ENCODE measurements at regions of chr4 and their contacts with region 1.

Region 1: GRCh38 chr4:169612871-169613859 is 782 bp upstream of the NEK1 start:
- DNase-seq: no peak

Region 2: DNA sequence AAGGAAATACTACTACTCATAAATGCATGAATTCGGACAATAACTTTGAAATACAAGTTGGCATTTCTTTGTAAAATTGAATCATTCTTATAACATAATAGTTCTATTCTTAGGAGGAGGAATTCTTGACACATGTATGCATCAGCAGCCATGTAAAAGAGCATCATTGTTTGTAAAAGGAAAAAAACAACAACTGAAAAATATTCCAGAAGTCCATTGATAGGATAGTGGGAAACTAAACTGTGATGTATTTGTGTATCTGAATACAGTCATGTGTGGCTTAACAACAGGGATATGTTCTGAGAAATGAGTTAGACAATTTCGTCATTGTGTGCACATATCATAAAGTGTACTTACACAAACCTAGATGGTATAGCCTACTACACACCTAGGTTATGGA is 240.4 kb before region 1 on chr4:
- intact Hi-C with region 1: no loop called
- DNase-seq: no peak

Region 3: GRCh38 chr4:169675825-169676224 is 62.7 kb after region 1 on chr4:
- intact Hi-C with region 1: no loop called
- DNase-seq: no peak

Region 4: DNA sequence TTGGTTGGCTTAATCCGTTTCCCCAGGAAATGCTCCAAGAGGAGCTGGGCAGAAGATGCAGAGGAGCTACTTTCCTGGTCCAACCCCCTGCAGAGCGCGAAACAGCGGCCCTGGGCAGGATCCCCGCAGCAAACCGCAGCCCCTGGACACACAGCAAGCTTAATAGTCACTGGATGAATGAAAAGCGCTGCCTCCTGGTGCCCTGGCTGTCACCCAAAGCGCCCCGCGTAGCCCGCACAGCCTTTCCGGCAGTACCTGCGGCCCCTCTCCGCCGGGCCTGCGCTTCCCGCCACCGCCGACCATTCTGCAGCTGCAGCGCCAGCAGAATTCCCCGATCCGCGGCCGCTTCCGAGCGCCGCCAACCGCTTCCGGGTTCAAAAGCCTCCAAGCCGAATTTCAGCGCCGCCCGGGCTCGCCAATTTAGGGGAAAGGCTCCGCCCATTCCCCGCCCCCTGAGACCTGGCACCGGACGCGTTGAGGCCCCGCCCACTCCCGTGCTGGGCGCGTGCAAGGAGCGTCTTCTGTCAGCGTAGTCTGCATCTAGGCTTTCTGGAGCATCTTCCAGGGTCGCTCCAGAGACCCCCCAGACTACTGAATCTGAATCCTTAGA is 144.5 kb after region 1 on chr4 and contains the start of gene HPF1:
- intact Hi-C with region 1: loop called (anchors 2 kb)
- DNase-seq: peak; percentile 96
- total RNA-seq, gene HPF1: 18.0 TPM